ENCODE measurements at regions of chr6 and their contacts with region 1.

Region 1: DNA sequence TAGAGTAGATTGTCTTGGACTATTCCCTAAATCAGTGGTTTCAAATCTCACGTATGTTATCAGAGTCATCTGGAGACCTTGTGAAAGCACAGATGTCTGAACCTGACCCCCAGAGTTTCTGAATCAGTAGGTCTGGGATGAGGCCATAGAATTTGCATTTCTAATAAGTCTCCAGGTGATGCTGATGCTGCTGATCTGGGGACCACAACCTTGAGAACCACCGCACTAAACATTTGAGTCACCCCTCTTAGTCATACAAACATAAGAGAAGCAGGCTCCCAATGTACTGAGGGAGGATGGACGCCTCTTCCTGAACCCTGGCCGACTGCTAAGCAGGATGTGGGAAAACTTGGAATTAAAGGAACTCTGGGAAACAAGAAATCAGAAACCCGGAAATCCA is 187.8 kb upstream of the PRDM1 start:
- DNase-seq: no peak
- H3K4me3 Mint-ChIP-seq: no peak overlapping the region
- H3K27ac Mint-ChIP-seq: no peak overlapping the region
- H3K4me1 Mint-ChIP-seq: peaks cover 34% of the 10 kb centered on the region
- H3K27me3 Mint-ChIP-seq: no peaks in the 10 kb centered on the region

Region 2: GRCh38 chr6:105484238-105485161 is 413.8 kb before region 1 on chr6:
- intact Hi-C with region 1: loop called (anchors 1 kb)
- DNase-seq: no peak
- H3K4me3 Mint-ChIP-seq: peak overlapping the region; percentile 27
- H3K27ac Mint-ChIP-seq: peak overlapping the region; percentile 59
- H3K4me1 Mint-ChIP-seq: peaks cover 72% of the 10 kb centered on the region
- H3K27me3 Mint-ChIP-seq: peaks cover 7% of the 10 kb centered on the region

Region 3: DNA sequence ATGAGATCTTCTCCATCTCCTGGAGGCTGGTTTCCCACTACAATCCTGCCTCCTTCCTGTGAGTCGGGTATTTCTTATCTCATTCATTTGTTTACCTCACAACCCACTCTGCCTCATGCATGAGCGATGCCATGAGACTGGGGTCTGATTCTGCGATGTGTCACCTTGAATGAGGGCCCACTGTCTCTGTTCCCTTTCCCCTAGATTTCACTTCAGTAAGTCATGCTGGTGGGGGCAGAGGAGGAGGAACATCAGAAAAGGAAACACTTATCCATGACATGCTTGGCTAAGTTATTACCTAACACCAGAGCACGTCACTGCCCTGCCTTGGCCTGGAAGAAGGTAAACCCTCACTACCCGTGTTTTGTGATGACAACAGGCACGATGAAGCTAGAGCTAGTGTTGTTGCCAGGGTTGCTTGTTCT is 149.5 kb before region 1 on chr6:
- intact Hi-C with region 1: loop called (anchors 1 kb)
- DNase-seq: no peak
- H3K4me3 Mint-ChIP-seq: no peak overlapping the region
- H3K27ac Mint-ChIP-seq: no peak overlapping the region
- H3K4me1 Mint-ChIP-seq: peaks cover 57% of the 10 kb centered on the region
- H3K27me3 Mint-ChIP-seq: no peaks in the 10 kb centered on the region

Region 4: DNA sequence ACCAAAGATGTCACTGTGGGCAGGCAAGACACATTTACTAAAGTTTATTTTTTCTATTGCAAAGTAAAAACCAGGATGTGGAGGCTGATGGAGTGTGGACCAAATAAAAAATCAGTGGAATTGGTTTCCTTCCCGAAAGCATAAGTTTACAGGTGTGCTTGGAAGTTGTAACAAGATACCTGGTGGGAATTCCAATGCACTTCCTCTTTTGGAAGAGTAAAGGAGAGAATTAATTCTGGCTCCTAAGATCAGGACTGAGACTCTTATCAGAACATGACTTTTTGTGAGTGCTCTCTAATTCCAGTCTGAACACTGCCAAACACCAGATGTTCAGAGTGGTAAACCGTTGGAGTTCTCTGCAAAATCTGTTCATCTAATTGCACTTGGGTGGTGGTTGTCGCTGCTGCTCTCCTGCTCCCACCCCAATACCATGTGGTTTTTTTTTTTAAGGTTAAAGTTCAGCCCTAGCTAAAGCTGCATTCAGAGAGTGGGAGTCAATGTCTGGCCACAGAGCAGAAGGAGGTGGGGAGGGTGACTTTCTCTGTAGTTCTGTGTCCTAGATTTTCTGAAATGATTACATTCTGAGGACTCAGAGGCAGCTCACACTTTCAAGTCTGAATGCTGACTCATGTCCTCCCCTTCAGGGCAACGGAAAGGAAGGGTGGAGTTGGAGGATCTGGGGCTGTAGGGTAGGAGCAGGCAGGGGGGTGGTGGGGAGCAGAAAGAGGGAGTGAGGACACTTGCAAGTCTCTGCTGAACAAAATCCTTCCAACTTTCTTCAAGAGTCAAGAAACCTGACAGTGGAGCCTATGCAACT is 88.0 kb before region 1 on chr6:
- intact Hi-C with region 1: loop called (anchors 1 kb)
- DNase-seq: peak; percentile 73
- H3K4me3 Mint-ChIP-seq: peak overlapping the region; percentile 58
- H3K27ac Mint-ChIP-seq: peak overlapping the region; percentile 92
- H3K4me1 Mint-ChIP-seq: peaks cover 76% of the 10 kb centered on the region
- H3K27me3 Mint-ChIP-seq: no peaks in the 10 kb centered on the region

Region 5: DNA sequence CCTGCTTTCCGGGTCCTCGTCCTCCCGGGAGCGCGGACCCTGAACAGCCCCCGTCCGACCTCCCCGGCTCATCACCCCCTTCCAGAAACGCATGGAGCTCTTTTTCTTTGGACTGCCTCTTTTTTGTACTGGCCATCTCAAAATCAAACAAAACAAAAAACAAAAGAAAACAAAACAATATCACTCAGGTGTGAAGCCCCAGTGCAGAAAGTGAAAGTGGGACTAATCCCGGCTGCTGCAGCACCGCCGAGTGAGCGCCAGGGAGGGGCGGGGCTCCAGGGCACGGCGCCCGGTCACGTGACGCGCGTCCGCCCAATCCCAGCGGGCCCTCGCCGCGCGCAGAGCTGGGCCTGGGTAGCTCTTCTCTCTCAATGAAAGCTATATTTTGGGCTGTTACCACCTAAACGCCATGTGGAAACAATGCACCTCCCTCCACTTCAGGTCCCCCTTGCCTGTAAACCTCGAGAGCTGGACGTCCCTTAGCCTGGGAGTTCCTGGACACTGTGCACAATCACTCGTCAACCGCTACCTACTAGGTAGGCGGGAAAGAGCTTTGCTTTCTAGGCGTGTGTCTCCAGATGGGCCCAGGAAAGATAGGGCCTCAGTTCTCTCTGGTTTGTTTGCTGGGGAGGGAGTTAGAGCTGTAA is 94.2 kb after region 1 on chr6:
- intact Hi-C with region 1: loop called (anchors 1 kb)
- DNase-seq: peak; percentile 91
- H3K4me3 Mint-ChIP-seq: peak overlapping the region; percentile 89
- H3K27ac Mint-ChIP-seq: peak overlapping the region; percentile 96
- H3K4me1 Mint-ChIP-seq: peaks cover 66% of the 10 kb centered on the region
- H3K27me3 Mint-ChIP-seq: peaks cover 24% of the 10 kb centered on the region

Region 6: DNA sequence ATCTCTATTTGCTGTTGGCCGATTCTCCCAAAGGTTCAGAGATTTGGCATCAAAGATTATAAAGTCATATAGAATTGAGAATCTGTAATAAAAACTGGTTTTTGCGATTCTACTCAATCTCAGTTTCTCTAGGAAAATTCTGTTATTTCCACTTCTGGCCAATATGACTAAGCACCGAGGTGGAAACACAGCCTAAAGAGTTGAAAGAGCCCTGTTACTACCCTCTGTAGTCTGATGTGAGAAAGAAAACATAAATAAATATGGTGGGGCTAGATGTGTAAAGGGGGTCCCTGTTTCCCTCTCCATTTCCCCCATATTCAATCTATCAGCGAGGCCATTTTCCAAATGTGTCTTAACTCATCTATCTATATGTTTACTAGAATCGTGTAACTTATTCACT is 271.2 kb after region 1 on chr6:
- intact Hi-C with region 1: loop called (anchors 1 kb)
- DNase-seq: no peak
- H3K4me3 Mint-ChIP-seq: no peak overlapping the region
- H3K27ac Mint-ChIP-seq: no peak overlapping the region
- H3K4me1 Mint-ChIP-seq: peaks cover 69% of the 10 kb centered on the region
- H3K27me3 Mint-ChIP-seq: peaks cover 3% of the 10 kb centered on the region

Region 7: GRCh38 chr6:106512048-106512967 is 614.0 kb after region 1 on chr6:
- intact Hi-C with region 1: loop called (anchors 10 kb)
- DNase-seq: peak; percentile 81
- H3K4me3 Mint-ChIP-seq: peak overlapping the region; percentile 91
- H3K27ac Mint-ChIP-seq: peak overlapping the region; percentile 93
- H3K4me1 Mint-ChIP-seq: peaks cover 58% of the 10 kb centered on the region
- H3K27me3 Mint-ChIP-seq: peaks cover 21% of the 10 kb centered on the region

Measured in activated T-helper 1 cell treated with anti-CD3 and anti-CD28 coated beads, Interleukin-12 subunit alpha, Interleukin-12 subunit beta, Interleukin-2, Interleukin-4 antibody, amounts not matched to agents 30 ng/mL and 10 ng/mL and 1 ng/mL, durations not matched to agents 14 hours and 24 hours and 36 hours (primary cell).